ENCODE measurements at regions of chr18 and their contacts with region 1.

Region 1: DNA sequence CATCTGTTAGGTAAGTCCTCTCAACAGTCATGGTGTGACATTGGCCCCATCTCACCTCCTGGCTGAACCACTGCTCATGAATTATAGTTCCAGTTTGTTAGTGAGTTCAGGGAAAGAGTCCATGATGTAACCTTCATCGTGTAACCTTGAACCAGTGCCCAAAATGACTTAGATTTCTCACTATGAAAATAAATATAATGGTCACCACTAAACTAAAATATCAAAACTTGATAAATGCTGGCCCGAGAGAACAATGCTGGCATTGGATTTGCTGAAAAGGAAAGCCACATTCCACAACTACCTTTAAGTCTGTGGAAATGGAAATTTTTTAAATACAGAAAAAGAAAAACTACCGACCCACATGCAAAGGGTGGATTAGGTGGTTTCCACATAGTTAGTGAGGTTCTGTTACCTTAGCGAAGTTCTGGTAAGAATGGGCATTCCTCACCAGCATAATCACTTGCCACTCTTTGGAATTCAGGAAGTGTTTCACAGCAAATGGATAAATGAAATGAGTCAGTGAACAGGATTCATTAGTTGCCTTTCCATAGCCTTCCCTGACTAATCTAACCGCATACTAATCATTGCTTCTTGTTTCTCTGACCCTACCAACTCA is 133.9 kb upstream of the CTAGE1 start:
- DNase-seq: peak; percentile 92
- H3K4me3 ChIP-seq: no peak overlapping the region
- H3K27ac ChIP-seq: peak overlapping the region; percentile 79
- H3K4me1 ChIP-seq: peaks cover 31% of the 10 kb centered on the region
- H3K27me3 ChIP-seq: no peaks in the 10 kb centered on the region
- CTCF ChIP-seq: no peak
- POLR2A ChIP-seq: peak; percentile 35

Region 2: GRCh38 chr18:22517356-22517755 is 34.3 kb before region 1 on chr18:
- CTCF ChIA-PET with region 1: no interaction called
- POLR2A ChIA-PET with region 1: no interaction called
- dilution Hi-C with region 1: no loop called
- intact Hi-C with region 1: loop called (anchors 5 kb)
- DNase-seq: no peak
- H3K4me3 ChIP-seq: no peak overlapping the region
- H3K27ac ChIP-seq: no peak overlapping the region
- H3K4me1 ChIP-seq: no peaks in the 10 kb centered on the region
- H3K27me3 ChIP-seq: no peaks in the 10 kb centered on the region
- CTCF ChIP-seq: no peak
- POLR2A ChIP-seq: no peak

Region 3: GRCh38 chr18:22528291-22528690 is 23.4 kb before region 1 on chr18:
- CTCF ChIA-PET with region 1: no interaction called
- POLR2A ChIA-PET with region 1: no interaction called
- dilution Hi-C with region 1: no loop called
- intact Hi-C with region 1: no loop called
- DNase-seq: no peak
- H3K4me3 ChIP-seq: no peak overlapping the region
- H3K27ac ChIP-seq: no peak overlapping the region
- H3K4me1 ChIP-seq: no peaks in the 10 kb centered on the region
- H3K27me3 ChIP-seq: no peaks in the 10 kb centered on the region
- CTCF ChIP-seq: no peak
- POLR2A ChIP-seq: no peak